GM12878 (cell line): ENCODE measurements at regions of chr9 and their contacts with region 1.

Region 1: DNA sequence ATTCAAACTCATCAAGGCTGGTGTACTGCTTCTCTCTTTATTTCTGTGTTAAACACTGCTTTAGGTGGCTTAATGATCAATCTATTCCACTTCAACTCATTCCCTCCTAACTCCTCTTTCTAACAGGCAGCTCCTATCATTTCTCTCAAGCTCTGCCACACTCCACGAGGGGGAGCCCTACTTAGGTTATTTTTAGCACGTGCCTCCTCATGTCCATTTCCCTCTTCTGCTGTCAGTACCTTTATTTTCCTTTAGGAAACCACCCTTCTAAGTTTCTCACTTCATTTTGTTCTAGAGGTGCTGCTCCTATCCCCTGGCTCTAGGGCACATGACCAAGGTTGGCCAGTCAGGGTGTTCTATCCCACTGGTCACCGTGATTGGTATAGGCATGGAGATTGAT is 6.7 kb upstream of the BRINP1 start:
- DNase-seq: no peak
- ATAC-seq: peak; percentile 33; the same call in 2 of the 3 replicates
- H3K4me3 ChIP-seq: no peak overlapping the region
- H3K27ac ChIP-seq: no peak overlapping the region
- H3K4me1 ChIP-seq: no peaks in the 10 kb centered on the region
- H3K27me3 ChIP-seq: no peaks in the 10 kb centered on the region
- CTCF ChIP-seq: peak; percentile 23 to 31 (median 30); a peak in 3 of 6 replicates
- EP300 ChIP-seq: no peak
- POLR2A ChIP-seq: no peak
- RAD21 ChIP-seq: no peak

Region 2: DNA sequence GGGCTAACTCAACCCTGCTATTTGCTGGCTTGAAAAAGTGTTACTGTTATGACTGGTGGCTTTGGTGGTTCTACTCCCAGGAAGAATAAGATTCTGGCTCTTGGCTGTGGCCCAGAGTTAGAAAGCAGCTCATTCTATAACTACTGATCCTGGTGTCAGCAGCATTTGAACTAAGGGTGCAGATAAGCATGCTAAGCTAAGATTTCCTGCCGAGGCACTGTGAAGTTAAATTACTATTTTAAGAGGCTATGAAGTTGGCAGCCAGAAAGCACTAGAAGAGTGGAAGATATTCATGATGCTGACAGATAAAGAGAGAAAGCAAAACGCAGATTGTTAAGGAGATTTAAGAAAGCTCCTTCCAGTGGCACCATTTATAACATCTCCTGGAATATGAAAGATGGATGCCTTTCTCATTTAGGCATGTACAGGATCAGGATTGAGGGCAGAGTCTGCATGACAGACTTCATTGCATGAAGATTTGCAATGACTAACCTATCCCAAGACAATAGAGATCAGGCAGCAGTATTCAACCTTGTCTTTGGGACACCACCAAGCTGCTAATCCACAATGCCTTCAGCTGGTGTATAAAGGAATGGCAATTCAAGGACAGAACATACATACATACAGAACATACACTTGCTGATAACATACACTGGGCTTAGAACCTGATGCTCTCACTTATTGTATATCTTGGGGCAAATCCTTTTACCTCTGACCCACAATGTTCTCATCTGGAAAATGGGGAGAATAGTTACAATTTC is 18.4 kb before region 1 on chr9:
- CTCF ChIA-PET with region 1: no interaction called
- POLR2A ChIA-PET with region 1: no interaction called
- RAD21 ChIA-PET with region 1: no interaction called
- SMC1A ChIA-PET with region 1: no interaction called
- in situ Hi-C with region 1: no loop called
- intact Hi-C with region 1: loop called (anchors 2 kb)
- DNase-seq: no peak
- ATAC-seq: no peak
- H3K4me3 ChIP-seq: no peak overlapping the region
- H3K27ac ChIP-seq: no peak overlapping the region
- H3K4me1 ChIP-seq: no peaks in the 10 kb centered on the region
- H3K27me3 ChIP-seq: no peaks in the 10 kb centered on the region
- CTCF ChIP-seq: no peak
- EP300 ChIP-seq: no peak
- POLR2A ChIP-seq: no peak
- RAD21 ChIP-seq: no peak

Region 3: DNA sequence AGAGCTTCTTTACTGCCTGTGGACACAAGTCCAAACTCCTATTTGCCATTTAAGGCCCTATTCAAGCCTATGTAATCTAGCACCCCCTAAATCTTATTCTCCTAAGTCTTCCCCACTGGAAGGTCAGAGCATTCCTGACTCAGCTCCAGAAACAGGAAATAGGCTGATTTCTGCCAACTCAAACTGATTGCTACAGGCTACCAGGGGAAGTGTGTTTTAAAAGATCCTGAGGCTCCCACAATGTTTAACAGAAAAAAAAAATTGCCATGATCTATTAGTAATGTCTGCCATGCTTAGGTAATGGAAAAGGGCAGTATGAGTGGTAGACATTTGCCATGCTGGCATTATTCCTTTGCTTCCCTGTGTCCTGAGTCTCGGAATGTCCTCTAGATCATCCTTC is 59.2 kb after region 1 on chr9:
- CTCF ChIA-PET with region 1: no interaction called
- POLR2A ChIA-PET with region 1: no interaction called
- RAD21 ChIA-PET with region 1: no interaction called
- SMC1A ChIA-PET with region 1: no interaction called
- in situ Hi-C with region 1: no loop called
- intact Hi-C with region 1: no loop called
- DNase-seq: no peak
- ATAC-seq: no peak
- H3K4me3 ChIP-seq: no peak overlapping the region
- H3K27ac ChIP-seq: no peak overlapping the region
- H3K4me1 ChIP-seq: no peaks in the 10 kb centered on the region
- H3K27me3 ChIP-seq: no peaks in the 10 kb centered on the region; a peak in 1 of 4 replicates
- CTCF ChIP-seq: no peak
- EP300 ChIP-seq: no peak
- POLR2A ChIP-seq: no peak
- RAD21 ChIP-seq: no peak